H1 (cell line): ENCODE measurements at regions of chr1 and their contacts with region 1.

Region 1: GRCh38 chr1:204763706-204764427 is 78.3 kb upstream of the LRRN2 start:
- DNase-seq: peak; percentile 77 to 89
- H3K4me3 ChIP-seq: no peak overlapping the region
- H3K27ac ChIP-seq: no peak overlapping the region
- H3K4me1 ChIP-seq: peaks cover 0 to 5% (median 2%) of the 10 kb centered on the region in 4 experiments; a peak in 4 of 7 replicates
- H3K27me3 ChIP-seq: no peaks in the 10 kb centered on the region
- CTCF ChIP-seq: peak; percentile 93 to 98 (median 98)
- EP300 ChIP-seq: peak in 1 of 2 experiments; percentile 57; a peak in 1 of 3 replicates
- POLR2A ChIP-seq: no peak
- RAD21 ChIP-seq: peak; percentile 90 to 91

Region 2: GRCh38 chr1:204578867-204579664 is 184.8 kb before region 1 on chr1:
- CTCF ChIA-PET with region 1: interaction called, 10 read pairs
- POLR2A ChIA-PET with region 1: interaction called, 5 read pairs
- DNase-seq: no peak
- H3K4me3 ChIP-seq: peak overlapping the region in 1 of 4 experiments; percentile 3; a peak in 2 of 8 replicates
- H3K27ac ChIP-seq: no peak overlapping the region
- H3K4me1 ChIP-seq: peaks cover 18 to 40% (median 27%) of the 10 kb centered on the region in 4 experiments
- H3K27me3 ChIP-seq: peaks cover 0 to 12% (median 4%) of the 10 kb centered on the region in 4 experiments; a peak in 3 of 7 replicates
- CTCF ChIP-seq: no peak
- EP300 ChIP-seq: no peak
- POLR2A ChIP-seq: no peak
- RAD21 ChIP-seq: no peak

Region 3: GRCh38 chr1:204640578-204640977 is 123.3 kb before region 1 on chr1:
- CTCF ChIA-PET with region 1: interaction called, 14 read pairs
- POLR2A ChIA-PET with region 1: no interaction called
- DNase-seq: no peak
- H3K4me3 ChIP-seq: no peak overlapping the region
- H3K27ac ChIP-seq: no peak overlapping the region
- H3K4me1 ChIP-seq: no peaks in the 10 kb centered on the region
- H3K27me3 ChIP-seq: no peaks in the 10 kb centered on the region
- CTCF ChIP-seq: 0 out of 4 replicates have a peak, but pooled peaks of 1 of the 3 experiments have one; percentile 16
- EP300 ChIP-seq: no peak
- POLR2A ChIP-seq: no peak
- RAD21 ChIP-seq: no peak; a peak in 1 of 4 replicates

Region 4: GRCh38 chr1:204670152-204670927 is 93.5 kb before region 1 on chr1:
- CTCF ChIA-PET with region 1: interaction called, 10 read pairs
- POLR2A ChIA-PET with region 1: no interaction called
- DNase-seq: no peak
- H3K4me3 ChIP-seq: no peak overlapping the region
- H3K27ac ChIP-seq: no peak overlapping the region
- H3K4me1 ChIP-seq: peaks cover 0 to 6% (median 3%) of the 10 kb centered on the region in 4 experiments; a peak in 3 of 7 replicates
- H3K27me3 ChIP-seq: no peaks in the 10 kb centered on the region; a peak in 2 of 7 replicates
- CTCF ChIP-seq: no peak
- EP300 ChIP-seq: no peak
- POLR2A ChIP-seq: no peak
- RAD21 ChIP-seq: no peak

Region 5: DNA sequence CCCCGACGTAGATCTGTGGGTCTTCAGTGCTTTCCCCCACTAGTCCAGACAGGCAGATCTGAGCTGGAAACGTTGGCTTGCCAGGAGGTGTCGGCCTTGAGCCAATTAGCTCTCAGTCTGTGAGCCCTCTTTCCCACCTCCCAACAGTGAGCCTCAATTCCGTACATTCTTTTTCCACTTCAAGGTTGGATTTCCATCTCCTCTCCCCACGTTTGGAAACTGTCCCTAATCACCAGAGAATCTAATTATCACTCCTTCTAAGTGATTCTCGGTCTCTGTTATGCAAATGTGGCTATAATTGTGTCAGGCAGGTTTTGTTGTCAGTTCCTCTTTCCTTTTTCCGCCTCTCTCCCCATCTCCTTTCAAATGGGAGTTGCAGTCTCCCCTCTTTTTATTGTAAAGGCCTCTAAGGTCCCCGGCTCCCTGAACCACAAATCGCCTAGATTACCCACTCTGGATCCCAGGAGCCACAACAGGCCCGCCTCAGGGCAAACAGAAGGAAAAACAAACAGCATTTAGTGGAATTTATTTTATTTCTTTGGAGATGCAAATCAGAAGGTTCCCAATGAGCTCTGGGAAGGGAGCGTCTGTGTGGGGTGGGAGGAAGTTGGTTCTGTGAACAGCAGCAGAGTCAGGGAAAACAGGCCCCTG is 48.9 kb before region 1 on chr1:
- CTCF ChIA-PET with region 1: interaction called, 31 read pairs
- POLR2A ChIA-PET with region 1: no interaction called
- DNase-seq: no peak
- H3K4me3 ChIP-seq: peak overlapping the region in 1 of 4 experiments; percentile 38; a peak in 2 of 8 replicates
- H3K27ac ChIP-seq: no peak overlapping the region
- H3K4me1 ChIP-seq: peaks cover 12 to 29% (median 20%) of the 10 kb centered on the region in 4 experiments
- H3K27me3 ChIP-seq: peaks cover 22 to 54% (median 46%) of the 10 kb centered on the region in 4 experiments
- CTCF ChIP-seq: peak; percentile 55 to 72 (median 65)
- EP300 ChIP-seq: no peak
- POLR2A ChIP-seq: no peak
- RAD21 ChIP-seq: peak; percentile 69 to 74

Region 6: DNA sequence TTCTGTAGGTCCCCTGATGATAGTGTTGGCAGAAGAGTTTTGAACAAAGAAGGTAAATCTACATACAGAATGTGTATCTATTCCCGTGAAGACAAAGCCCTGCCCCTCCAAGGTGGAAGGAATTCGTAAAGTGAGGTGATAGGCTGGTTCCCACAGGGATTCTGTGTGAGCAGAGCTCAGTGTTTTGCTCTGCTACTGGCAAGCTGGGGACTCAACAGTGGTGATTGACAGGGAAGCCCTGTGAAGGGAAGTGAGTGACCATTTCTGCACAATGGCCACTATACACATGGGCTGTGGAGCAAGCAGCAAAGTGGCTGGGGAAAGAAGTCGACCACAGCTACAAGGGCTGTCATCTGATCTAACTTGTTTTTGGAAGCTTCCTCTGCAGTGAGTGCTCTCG is 11.7 kb after region 1 on chr1:
- CTCF ChIA-PET with region 1: interaction called, 13 read pairs
- POLR2A ChIA-PET with region 1: no interaction called
- DNase-seq: no peak
- H3K4me3 ChIP-seq: no peak overlapping the region
- H3K27ac ChIP-seq: no peak overlapping the region
- H3K4me1 ChIP-seq: 0 out of 7 replicates have a peak, but pooled peaks cover 0 to 3% (median 0%) of the 10 kb centered on the region in 4 experiments
- H3K27me3 ChIP-seq: no peaks in the 10 kb centered on the region; a peak in 2 of 7 replicates
- CTCF ChIP-seq: no peak
- EP300 ChIP-seq: no peak
- POLR2A ChIP-seq: no peak
- RAD21 ChIP-seq: no peak